ENCODE measurements at regions of chr1 and their contacts with region 1.

Region 1: DNA sequence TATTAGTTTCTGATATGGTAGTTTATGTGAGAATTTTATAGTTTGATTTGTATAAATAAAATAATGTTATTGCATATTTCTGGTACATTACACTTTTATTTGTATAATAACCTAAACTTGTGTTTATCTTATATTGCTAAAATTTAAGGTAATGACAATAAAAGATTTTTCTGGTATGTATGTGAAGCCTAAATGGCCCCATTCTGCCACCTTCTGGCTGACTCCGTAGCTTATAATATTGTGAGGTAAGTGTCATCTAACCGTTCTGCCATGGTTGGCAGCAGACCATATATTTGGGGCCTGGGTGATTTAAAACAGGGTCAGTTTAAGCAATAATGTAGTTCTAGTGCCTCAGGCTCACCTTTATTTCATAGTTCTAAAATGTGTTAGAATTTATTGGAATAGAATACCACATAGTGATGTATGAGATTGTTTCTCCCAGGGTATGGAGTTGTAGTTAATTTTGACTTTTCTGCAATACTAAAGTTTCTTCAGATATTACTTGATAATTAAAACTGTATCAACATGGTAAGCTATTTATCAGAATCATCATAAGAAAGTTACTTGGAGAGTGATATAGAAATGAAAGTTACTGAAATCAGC is 21.2 kb upstream of the PRKACB start:
- DNase-seq: peak; percentile 59
- H3K4me3 Mint-ChIP-seq: no peak overlapping the region
- H3K27ac Mint-ChIP-seq: no peak overlapping the region
- H3K4me1 Mint-ChIP-seq: no peaks in the 10 kb centered on the region
- H3K27me3 Mint-ChIP-seq: peaks cover 1% of the 10 kb centered on the region

Region 2: GRCh38 chr1:83905315-83905907 is 217.5 kb before region 1 on chr1:
- CTCF ChIA-PET with region 1: interaction called, 23 read pairs
- POLR2A ChIA-PET with region 1: no interaction called
- intact Hi-C with region 1: loop called (anchors 10 kb)
- DNase-seq: no peak
- H3K4me3 Mint-ChIP-seq: no peak overlapping the region
- H3K27ac Mint-ChIP-seq: no peak overlapping the region
- H3K4me1 Mint-ChIP-seq: no peaks in the 10 kb centered on the region
- H3K27me3 Mint-ChIP-seq: peaks cover 13% of the 10 kb centered on the region

Region 3: DNA sequence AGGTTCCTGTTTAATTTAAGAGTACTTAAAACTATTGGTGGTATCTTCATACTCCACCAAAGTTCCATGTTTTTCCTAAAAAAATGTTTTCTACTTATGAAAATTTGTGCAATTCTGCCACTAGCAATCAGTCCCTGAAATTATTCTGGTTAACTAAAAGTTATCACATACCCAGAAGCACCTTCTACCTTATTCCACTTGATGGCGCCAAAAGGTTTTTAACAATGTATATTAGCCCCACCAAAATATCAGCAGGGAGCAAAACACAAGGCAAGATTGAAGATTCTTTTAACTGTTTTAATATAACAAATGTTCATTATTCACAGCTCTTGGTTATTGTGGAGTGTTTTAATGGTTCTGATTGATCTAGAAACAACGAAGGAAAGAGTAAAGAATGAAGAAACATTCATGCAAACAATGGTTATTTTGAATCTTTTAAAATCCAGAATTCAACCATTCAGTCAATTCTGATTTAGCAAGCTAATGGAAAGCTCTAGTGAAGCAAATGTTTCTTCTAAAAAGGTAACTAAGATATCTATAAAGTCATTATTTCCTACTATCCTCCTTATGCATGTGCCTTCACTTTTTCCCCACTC is 191.1 kb before region 1 on chr1:
- CTCF ChIA-PET with region 1: interaction called, 75 read pairs
- POLR2A ChIA-PET with region 1: no interaction called
- intact Hi-C with region 1: loop called (anchors 1 kb)
- DNase-seq: no peak
- H3K4me3 Mint-ChIP-seq: no peak overlapping the region
- H3K27ac Mint-ChIP-seq: no peak overlapping the region
- H3K4me1 Mint-ChIP-seq: no peaks in the 10 kb centered on the region
- H3K27me3 Mint-ChIP-seq: peaks cover 6% of the 10 kb centered on the region

Region 4: DNA sequence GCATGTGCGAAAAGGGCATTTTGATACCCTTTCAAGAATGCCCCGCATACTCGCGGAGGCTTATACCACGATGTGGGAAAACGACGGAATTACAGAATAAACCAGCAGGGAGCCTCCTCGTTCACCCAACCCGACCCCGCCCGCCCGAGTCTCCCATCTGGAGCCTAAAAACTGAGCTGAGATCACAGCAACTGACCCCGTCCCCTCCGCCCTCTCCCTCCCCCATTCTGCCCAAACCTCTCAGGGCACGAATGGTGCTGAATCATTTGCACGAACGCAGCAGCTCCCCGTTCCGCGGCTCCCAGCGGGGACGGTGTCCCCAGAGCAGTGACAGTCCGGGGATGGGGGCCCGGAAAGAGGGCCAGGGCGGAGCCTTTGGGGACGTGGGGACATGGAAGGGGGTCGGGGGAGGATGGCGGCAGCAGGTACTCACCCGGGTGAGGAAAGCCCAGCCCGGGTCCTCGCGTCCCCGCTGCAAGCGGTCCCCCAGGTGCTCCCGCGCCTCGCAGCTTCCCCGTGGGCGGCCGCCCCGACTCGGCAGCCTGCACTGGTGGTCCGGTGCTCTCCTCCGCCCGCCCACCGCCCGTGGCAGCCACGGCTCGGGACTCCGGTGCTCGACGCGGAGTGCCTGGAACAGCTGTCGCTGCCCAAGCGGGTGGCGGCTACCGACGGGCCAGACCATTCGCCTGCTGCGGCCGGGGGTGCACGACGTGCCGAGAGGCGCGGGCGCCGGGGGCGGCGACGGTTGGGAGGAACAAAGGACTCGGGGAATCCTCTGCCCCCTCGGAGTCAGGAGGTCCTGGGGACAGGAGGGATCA is 124.2 kb before region 1 on chr1 and contains the start of gene TTLL7:
- CTCF ChIA-PET with region 1: no interaction called
- POLR2A ChIA-PET with region 1: no interaction called
- intact Hi-C with region 1: loop called (anchors 5 kb)
- DNase-seq: peak; percentile 73
- H3K4me3 Mint-ChIP-seq: peak within 1 kb of the TSS; percentile 73
- H3K27ac Mint-ChIP-seq: no peak within 1 kb of the TSS
- H3K4me1 Mint-ChIP-seq: peaks cover 9% of the 10 kb centered on the region
- H3K27me3 Mint-ChIP-seq: peaks cover 52% of the 10 kb centered on the region
- total RNA-seq, gene TTLL7: 0.76 to 0.90 TPM

Measured in activated CD4-positive, alpha-beta memory T cell treated with anti-CD3 and anti-CD28 coated beads for 36 hours (primary cell).